ENCODE measurements at regions of chr1 and their contacts with region 1.

Region 1: GRCh38 chr1:147890177-147890790 is 12.3 kb upstream of the GJA8 start:
- DNase-seq: peak; percentile 31 to 69
- ATAC-seq: peak; percentile 52 to 89 (median 64)
- H3K4me3 ChIP-seq: no peak overlapping the region
- H3K4me3 Mint-ChIP-seq: no peak overlapping the region
- H3K27ac ChIP-seq: no peak overlapping the region
- H3K27ac Mint-ChIP-seq: no peak overlapping the region
- H3K4me1 ChIP-seq: no peaks in the 10 kb centered on the region
- H3K4me1 Mint-ChIP-seq: no peaks in the 10 kb centered on the region
- H3K27me3 ChIP-seq: no peaks in the 10 kb centered on the region
- H3K27me3 Mint-ChIP-seq: peaks cover 8 to 15% of the 10 kb centered on the region in 2 donors
- CTCF ChIP-seq: peak; percentile 39

Region 2: DNA sequence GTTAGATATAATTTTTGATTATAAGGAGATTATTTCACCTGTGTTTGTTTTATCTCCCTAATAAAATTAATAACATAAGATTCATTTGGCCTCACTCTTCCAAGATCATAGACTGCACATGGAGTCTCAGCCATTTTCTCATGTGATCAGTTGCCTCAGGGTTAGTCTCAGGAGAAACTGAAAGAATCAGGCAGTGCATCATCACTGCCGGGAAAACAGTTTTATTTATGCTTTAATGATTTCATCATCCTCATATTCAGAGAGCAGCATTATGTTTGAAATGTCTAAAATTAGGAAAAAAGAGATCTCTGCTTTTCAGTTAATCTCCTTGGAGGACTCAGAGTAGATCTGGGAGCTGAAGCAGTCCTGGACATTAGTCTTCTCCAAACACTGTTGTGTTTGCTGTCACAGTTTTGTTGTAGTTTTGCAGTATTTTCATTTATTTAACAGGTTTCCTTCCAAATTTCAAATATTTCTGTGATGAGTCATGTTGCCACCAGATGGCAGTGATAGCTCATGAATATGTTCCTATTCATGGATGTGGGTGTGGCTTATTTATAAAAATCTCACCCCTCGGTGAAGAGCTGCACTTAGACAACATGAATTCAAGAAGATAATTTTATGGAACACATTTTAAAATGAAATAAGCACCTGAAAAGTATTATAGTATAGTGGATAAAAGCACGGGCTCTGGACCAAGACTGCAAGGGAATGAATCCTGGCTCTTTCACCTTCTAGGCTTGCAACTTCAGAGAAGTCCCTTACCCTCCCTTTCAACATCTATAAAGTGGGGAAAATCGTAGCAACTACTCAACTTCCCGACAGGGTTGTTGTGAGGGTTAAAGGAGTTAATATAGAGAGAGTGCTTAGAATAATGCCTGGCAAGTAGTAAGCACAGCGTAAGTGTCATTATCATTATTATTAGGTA is 616.6 kb before region 1 on chr1:
- intact Hi-C with region 1: loop called (anchors 2 kb)
- DNase-seq: peak in 1 of 2 donors; percentile 73
- ATAC-seq: peak in 2 of 3 donors; percentile 61 to 64
- H3K4me3 ChIP-seq: no peak overlapping the region
- H3K4me3 Mint-ChIP-seq: no peak overlapping the region
- H3K27ac ChIP-seq: no peak overlapping the region
- H3K27ac Mint-ChIP-seq: no peak overlapping the region
- H3K4me1 ChIP-seq: no peaks in the 10 kb centered on the region
- H3K4me1 Mint-ChIP-seq: peaks cover 4 to 5% of the 10 kb centered on the region in 2 donors
- H3K27me3 ChIP-seq: no peaks in the 10 kb centered on the region
- H3K27me3 Mint-ChIP-seq: no peaks in the 10 kb centered on the region
- CTCF ChIP-seq: peak; percentile 65

Region 3: DNA sequence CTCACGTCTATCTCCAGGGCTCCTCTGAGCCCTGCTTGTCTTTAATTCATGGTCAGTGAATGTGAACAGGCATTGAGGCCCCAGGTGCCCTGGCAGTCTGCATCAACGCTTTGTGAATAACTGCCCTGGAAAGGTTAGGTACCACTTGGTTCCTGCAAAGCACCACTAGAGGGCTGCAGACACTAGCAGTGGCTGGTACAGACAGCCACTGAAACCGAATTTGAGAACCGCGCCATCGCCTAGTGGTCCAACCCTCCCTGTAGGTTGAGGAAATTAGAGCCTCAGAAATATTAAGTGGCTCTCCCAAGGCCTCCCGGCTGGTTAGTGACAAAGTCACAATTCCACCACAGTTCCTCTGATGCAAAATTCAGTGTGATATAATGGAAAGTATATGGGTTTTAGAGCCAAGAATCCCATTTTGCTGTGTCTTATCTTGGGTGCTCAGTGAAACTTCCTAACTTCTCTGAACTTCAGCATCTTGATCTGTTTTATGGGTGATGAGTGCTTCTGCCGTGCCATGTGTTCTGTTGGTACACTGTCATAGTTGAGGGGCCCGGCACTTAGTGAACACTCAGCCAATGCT is 395.2 kb before region 1 on chr1:
- intact Hi-C with region 1: loop called (anchors 1 kb)
- DNase-seq: peak; percentile 48 to 85
- ATAC-seq: peak; percentile 88 to 100 (median 99)
- H3K4me3 ChIP-seq: no peak overlapping the region
- H3K4me3 Mint-ChIP-seq: no peak overlapping the region
- H3K27ac ChIP-seq: no peak overlapping the region
- H3K27ac Mint-ChIP-seq: no peak overlapping the region
- H3K4me1 ChIP-seq: no peaks in the 10 kb centered on the region
- H3K4me1 Mint-ChIP-seq: no peaks in the 10 kb centered on the region
- H3K27me3 ChIP-seq: no peaks in the 10 kb centered on the region
- H3K27me3 Mint-ChIP-seq: peaks cover 11 to 13% of the 10 kb centered on the region in 2 donors
- CTCF ChIP-seq: peak; percentile 87

Region 4: DNA sequence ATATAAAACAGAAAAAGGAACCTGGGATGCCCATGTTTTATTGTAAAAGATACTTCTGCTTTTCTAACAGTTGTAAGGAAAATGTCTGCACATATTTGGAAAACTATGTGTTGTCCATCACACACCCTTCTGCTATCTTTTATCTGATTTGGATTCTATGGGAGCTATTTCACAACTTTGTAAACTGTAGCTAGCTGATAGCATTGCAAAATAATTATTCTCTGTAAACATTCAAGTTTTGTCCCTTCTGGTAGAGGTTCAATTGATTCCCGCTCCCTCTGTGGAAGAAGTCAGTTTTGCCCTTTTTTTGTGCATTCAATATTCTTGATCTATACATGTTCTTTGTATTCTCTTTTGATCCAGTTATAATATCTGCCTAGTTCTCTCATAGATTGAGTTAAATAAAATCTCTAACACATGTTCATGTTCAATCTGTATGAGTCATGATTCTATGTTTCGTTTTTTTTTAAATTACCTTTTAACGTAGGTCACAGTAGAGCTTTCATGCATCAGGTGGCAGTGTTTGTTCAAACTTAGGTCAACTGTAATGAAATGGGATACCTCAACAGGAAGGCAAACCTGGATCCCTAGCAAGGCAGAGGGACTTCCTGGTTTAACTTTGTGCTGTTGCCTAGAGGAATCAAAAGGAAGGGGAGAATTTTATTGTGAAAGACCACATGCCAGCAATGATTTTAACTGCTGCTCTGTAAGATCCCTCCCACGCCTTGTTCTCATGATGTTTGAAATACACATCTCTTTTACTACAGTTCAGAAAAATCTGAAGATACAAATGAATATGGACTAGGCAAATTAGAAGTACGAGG is 375.0 kb before region 1 on chr1:
- intact Hi-C with region 1: loop called (anchors 5 kb)
- DNase-seq: peak in 1 of 2 donors; percentile 58
- ATAC-seq: peak in 2 of 3 donors; percentile 39 to 44
- H3K4me3 ChIP-seq: no peak overlapping the region
- H3K4me3 Mint-ChIP-seq: no peak overlapping the region
- H3K27ac ChIP-seq: no peak overlapping the region
- H3K27ac Mint-ChIP-seq: no peak overlapping the region
- H3K4me1 ChIP-seq: no peaks in the 10 kb centered on the region
- H3K4me1 Mint-ChIP-seq: peaks cover 6% of the 10 kb centered on the region in 2 donors
- H3K27me3 ChIP-seq: peaks cover 3% of the 10 kb centered on the region
- H3K27me3 Mint-ChIP-seq: peaks cover 16 to 32% of the 10 kb centered on the region in 2 donors
- CTCF ChIP-seq: no peak

Region 5: DNA sequence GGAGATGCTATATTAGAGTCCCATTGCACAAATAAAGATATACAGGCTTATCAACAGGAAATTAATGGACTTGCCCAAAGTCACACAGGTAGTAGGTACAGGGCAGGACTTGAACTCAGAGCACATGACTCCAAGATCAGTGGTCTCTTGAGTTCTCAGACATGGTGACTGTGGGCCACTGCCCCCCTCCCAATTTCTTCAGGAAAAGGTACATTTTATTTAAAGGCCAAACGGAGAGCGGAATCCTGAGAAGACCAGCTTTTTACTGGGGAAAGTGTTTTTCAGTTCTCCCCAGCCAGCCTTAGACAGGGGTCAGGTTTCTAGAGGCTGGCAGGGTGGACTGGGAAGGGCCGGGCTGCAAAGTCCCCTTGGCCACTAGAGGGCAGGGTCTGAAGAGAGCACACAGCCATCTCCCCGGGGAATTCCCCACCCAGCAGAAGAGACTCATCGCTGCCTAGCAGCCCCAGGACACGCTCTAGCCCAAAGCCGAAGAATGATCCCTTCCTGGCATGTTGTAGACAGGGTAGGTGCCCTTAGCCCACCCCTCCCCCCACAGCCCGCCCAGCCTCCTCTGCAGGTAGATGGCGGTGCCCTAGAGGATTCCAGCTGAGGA is 249.6 kb before region 1 on chr1:
- intact Hi-C with region 1: loop called (anchors 2 kb)
- DNase-seq: peak; percentile 73 to 91
- ATAC-seq: peak; percentile 100
- H3K4me3 ChIP-seq: no peak overlapping the region
- H3K4me3 Mint-ChIP-seq: no peak overlapping the region
- H3K27ac ChIP-seq: no peak overlapping the region
- H3K27ac Mint-ChIP-seq: peak overlapping the region in 1 of 2 donors; percentile 79
- H3K4me1 ChIP-seq: peaks cover 7% of the 10 kb centered on the region
- H3K4me1 Mint-ChIP-seq: peaks cover 4 to 15% of the 10 kb centered on the region in 2 donors
- H3K27me3 ChIP-seq: no peaks in the 10 kb centered on the region
- H3K27me3 Mint-ChIP-seq: peaks cover 0 to 3% of the 10 kb centered on the region in 2 donors
- CTCF ChIP-seq: peak; percentile 86

Region 6: GRCh38 chr1:147723691-147724323 is 166.5 kb before region 1 on chr1:
- intact Hi-C with region 1: loop called (anchors 10 kb)
- DNase-seq: peak in 1 of 2 donors; percentile 64
- ATAC-seq: peak in 1 of 3 donors; percentile 36
- H3K4me3 ChIP-seq: no peak overlapping the region
- H3K4me3 Mint-ChIP-seq: no peak overlapping the region
- H3K27ac ChIP-seq: no peak overlapping the region
- H3K27ac Mint-ChIP-seq: no peak overlapping the region
- H3K4me1 ChIP-seq: no peaks in the 10 kb centered on the region
- H3K4me1 Mint-ChIP-seq: no peaks in the 10 kb centered on the region
- H3K27me3 ChIP-seq: no peaks in the 10 kb centered on the region
- H3K27me3 Mint-ChIP-seq: peaks cover 30 to 41% of the 10 kb centered on the region in 2 donors
- CTCF ChIP-seq: no peak